PC-3 (cell line): ENCODE measurements at regions of chr2 and their contacts with region 1.

Region 1: GRCh38 chr2:222903234-222904220 is 42.7 kb downstream of the ACSL3 start:
- DNase-seq: peak; percentile 64
- ATAC-seq: peak; percentile 58
- H3K4me3 ChIP-seq: no peak overlapping the region
- H3K27ac ChIP-seq: no peak overlapping the region
- H3K4me1 ChIP-seq: peaks cover 30% of the 10 kb centered on the region
- H3K27me3 ChIP-seq: no peaks in the 10 kb centered on the region
- CTCF ChIP-seq: peak; percentile 78

Region 2: DNA sequence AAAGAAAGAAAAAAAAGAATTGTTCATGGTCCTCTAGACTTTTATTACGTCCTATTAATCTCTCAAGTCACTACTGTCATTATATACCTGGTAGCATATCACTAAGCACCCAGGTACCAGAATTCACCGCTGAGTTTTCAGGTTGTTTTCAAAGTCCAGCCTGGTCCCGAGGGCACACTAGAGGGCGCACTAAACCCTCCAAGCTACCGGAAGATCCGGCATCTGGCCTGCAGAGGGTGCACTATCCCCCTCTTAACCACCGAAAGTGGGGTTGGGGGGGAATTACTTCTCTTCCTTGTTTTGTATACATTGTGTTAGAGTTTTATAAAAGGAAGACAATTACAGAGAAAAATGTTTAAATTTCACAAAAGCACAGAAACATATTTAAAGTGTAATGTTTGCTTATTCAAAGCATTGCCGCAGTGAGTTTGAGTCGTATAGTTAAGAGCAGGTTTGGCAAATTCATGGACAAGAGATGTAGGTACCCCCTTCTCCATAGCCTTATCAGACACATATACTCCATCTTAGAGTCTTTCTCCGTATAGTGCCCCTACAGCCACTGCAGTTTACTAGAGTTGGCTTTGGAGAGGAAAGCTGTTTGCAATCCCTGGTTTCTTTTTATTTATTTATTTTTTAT is 212.8 kb before region 1 on chr2:
- CTCF ChIA-PET with region 1: no interaction called
- POLR2A ChIA-PET with region 1: no interaction called
- intact Hi-C with region 1: loop called (anchors 1 kb)
- DNase-seq: peak; percentile 86
- ATAC-seq: peak; percentile 87
- H3K4me3 ChIP-seq: peak overlapping the region; percentile 54; the same call in 1 of the 2 replicates
- H3K27ac ChIP-seq: no peak overlapping the region
- H3K4me1 ChIP-seq: no peaks in the 10 kb centered on the region; the same call in 1 of the 2 replicates
- H3K27me3 ChIP-seq: no peaks in the 10 kb centered on the region
- CTCF ChIP-seq: peak; percentile 100

Region 3: DNA sequence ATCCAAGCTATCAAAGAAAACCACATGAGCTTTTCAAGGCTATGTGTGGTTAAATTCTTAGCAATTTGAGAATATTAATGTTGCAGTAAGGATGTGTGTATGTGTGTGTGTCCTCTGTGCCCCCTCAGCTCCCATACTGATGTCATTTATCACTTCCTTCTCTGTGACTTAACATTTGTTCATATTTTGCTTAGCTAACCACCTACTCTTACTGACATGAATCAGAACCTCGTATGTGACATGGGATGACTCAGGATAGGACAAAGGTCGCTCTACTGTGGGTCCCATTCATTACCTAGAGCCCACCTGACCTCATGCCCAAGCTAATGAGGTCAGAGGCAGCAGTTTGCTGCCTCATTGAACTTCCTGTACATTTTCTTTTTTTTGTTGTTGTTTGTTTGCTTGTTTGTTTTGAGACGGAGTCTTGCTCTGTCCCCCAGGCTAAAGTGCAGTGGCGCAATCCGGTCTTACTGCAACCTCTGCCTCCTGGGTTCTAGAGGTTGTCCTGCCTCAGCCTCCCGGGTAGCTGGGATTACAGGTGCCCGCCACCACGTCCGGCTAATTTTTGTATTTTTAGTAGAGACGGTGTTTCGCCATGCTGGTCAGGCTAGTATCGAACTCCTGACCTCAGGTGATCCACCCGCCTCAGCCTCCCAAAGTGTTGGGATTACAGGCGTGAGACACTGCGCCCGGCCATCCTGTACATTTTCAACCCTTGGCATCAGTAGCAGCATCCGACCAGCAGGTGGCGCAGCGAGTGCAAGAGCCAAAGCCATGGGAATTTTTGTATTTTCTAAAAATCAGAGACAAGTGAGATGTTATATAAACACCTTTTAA is 195.6 kb before region 1 on chr2:
- CTCF ChIA-PET with region 1: interaction called, 4 read pairs
- POLR2A ChIA-PET with region 1: no interaction called
- intact Hi-C with region 1: loop called (anchors 1 kb)
- DNase-seq: peak; percentile 80
- ATAC-seq: peak; percentile 68
- H3K4me3 ChIP-seq: no peak overlapping the region
- H3K27ac ChIP-seq: peak overlapping the region; percentile 43
- H3K4me1 ChIP-seq: peaks cover 22% of the 10 kb centered on the region; the same call in 1 of the 2 replicates
- H3K27me3 ChIP-seq: no peaks in the 10 kb centered on the region
- CTCF ChIP-seq: peak; percentile 88

Region 4: DNA sequence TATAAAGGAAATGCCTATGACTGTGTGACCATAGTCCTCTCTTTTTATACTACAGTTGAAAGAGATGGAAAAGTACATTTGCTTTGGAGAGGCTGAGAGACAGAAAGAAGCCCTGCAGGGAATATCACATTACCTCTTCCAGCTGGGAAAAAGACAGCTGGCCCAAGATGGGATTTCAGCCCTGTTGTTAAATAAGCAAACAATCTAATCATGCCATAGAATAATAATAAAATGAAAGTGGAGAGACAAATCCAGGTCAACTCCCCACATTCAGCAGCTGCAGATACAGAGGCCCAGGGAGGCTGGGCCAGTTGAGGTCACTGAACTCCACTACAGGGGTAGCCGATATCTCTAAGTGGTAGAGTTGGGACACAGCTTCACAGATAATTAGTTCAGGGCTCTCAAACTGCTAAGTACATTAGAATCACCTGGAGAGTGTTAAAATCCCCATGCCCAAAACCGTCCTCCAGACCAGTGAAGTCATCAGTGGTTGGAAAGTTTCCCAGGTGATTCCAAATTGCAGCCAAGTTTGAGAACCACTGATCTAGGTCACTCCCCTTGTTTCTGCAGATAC is 150.2 kb before region 1 on chr2:
- CTCF ChIA-PET with region 1: no interaction called
- POLR2A ChIA-PET with region 1: interaction called, 15 read pairs
- intact Hi-C with region 1: no loop called
- DNase-seq: peak; percentile 44
- ATAC-seq: no peak
- H3K4me3 ChIP-seq: no peak overlapping the region
- H3K27ac ChIP-seq: no peak overlapping the region
- H3K4me1 ChIP-seq: peaks cover 25% of the 10 kb centered on the region
- H3K27me3 ChIP-seq: no peaks in the 10 kb centered on the region
- CTCF ChIP-seq: no peak

Region 5: GRCh38 chr2:222860740-222861410 is 42.7 kb before region 1 on chr2 and contains the start of gene ACSL3:
- CTCF ChIA-PET with region 1: interaction called, 6 read pairs
- POLR2A ChIA-PET with region 1: no interaction called
- intact Hi-C with region 1: loop called (anchors 1 kb)
- DNase-seq: peak; percentile 95
- ATAC-seq: peak; percentile 90
- H3K4me3 ChIP-seq: peak within 1 kb of the TSS; percentile 76
- H3K27ac ChIP-seq: peak within 1 kb of the TSS; percentile 97
- H3K4me1 ChIP-seq: peaks cover 39% of the 10 kb centered on the region
- H3K27me3 ChIP-seq: no peaks in the 10 kb centered on the region
- CTCF ChIP-seq: no peak
- total RNA-seq, gene ACSL3: 216 and 236 TPM in 2 replicates